ENCODE measurements at regions of chr4 and their contacts with region 1.

Region 1: DNA sequence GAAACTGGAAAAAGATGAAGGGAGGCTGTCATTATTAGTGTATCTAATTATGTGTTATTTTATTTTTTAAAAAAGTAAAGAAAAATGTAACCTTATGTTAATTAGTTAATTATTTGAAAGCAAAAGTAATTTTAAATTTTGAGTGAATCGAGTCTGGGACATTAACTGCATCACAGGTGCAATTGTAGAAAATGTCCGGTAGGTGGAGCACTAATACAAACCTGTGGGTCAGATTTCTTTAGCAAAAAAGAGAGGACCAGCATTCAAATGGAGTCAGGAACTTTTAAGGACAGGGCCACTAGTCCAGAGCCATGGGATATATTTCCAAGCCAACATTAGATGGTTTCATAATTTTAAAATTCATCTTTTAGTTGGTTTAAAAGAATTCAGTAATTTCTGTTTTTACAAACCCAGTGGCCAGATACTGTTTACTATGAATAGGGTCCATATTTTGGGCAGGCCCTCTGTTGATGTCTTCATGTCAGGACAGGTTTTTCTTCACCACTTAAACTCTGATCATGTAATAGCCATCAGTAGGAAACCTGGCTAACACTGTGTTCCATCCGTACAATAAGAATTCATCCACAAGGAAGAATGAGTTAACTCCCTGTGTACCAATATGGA is 27.2 kb downstream of the BST1 start:
- DNase-seq: no peak
- H3K4me3 ChIP-seq: no peak overlapping the region
- CTCF ChIP-seq: peak; percentile 76

Region 2: DNA sequence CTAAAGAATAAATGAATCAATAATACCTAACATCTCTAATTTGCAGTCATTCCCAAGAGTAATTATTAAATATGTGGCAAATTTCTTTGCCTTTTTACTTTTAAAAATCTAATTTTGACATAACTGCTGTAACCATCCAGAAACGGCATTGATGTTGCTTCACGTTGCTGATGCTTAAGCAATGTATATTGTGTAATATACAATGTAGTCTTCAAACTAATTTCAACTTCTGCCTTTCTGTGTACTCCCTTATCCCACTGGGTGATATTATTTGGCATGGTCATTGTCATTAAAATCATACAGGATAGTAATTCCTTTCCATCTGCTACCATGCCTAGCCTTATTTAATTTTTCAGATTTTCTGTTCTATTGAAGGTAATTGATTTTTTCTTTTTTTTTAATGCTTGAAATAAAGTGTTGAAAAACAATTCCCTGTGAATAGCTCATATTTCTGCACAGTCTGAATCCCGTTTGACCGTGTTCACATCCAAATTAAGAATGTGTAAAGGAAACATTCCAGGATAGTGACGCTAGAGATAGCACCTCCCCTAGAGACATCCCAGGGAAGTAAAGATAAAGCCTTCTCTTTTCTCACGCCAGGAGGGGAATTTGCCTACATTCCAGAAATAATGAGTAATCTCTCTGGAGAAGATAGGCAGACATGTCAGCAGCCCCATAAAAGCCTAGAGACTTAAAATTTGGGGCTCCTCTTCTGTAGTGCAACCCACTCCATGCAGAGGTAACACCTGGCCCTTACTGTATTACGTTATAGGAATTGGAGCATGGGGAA is 39.8 kb before region 1 on chr4:
- in situ Hi-C with region 1: loop called (anchors 5 kb)
- DNase-seq: peak; percentile 94
- H3K4me3 ChIP-seq: no peak overlapping the region
- CTCF ChIP-seq: no peak

Measured in astrocyte of the cerebellum (primary cell).